Left colon (tissue), 2 donors: ENCODE measurements at regions of chr11 and their contacts with region 1.

Region 1: GRCh38 chr11:5767056-5767455 is 13.0 kb downstream of the OR52N4 start:
- DNase-seq: no peak
- ATAC-seq: no peak

Region 2: GRCh38 chr11:5791165-5791564 is 24.1 kb after region 1 on chr11 and contains the start of gene OR52N1:
- intact Hi-C with region 1: loop called in 1 of 2 experiments (anchors 2 kb)
- DNase-seq: no peak
- ATAC-seq: no peak
- total RNA-seq, gene OR52N1: not detected

Region 3: GRCh38 chr11:6022956-6023355 is 255.9 kb after region 1 on chr11:
- intact Hi-C with region 1: no loop called
- DNase-seq: no peak
- ATAC-seq: peak; percentile 84

Region 4: DNA sequence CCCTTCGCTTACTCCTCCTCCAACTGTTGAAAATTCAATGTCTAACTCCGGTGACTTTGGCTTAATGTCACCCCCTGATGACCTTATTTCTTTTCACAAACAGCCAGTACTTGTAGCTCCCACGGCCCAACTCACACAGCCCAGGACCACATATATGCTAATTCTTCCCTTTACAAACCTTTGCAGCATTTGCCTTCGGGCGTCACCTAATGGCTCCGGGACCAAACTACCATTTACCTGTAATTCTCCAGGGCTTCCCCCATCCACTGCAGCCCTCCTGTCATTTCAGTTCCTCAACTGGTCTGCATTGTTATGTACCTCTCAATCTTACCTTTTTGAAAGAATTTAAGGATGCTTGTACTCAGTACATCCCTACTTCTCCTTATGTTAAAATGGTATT is 310.7 kb after region 1 on chr11:
- intact Hi-C with region 1: no loop called
- DNase-seq: no peak
- ATAC-seq: no peak